ENCODE measurements at regions of chr14 and their contacts with region 1.

Region 1: GRCh38 chr14:92724516-92725340 is 23.7 kb downstream of the LGMN start:
- DNase-seq: peak; percentile 89
- ATAC-seq: peak; percentile 95
- H3K4me3 ChIP-seq: peak overlapping the region in 2 of 3 experiments; percentile 40 to 48; a peak in 4 of 6 replicates
- H3K27ac ChIP-seq: peak overlapping the region; percentile 61
- H3K4me1 ChIP-seq: peaks cover 36% of the 10 kb centered on the region
- H3K27me3 ChIP-seq: no peaks in the 10 kb centered on the region
- CTCF ChIP-seq: no peak
- EP300 ChIP-seq: peak in 1 of 2 experiments; percentile 54; a peak in 2 of 4 replicates
- POLR2A ChIP-seq: no peak
- RAD21 ChIP-seq: no peak

Region 2: DNA sequence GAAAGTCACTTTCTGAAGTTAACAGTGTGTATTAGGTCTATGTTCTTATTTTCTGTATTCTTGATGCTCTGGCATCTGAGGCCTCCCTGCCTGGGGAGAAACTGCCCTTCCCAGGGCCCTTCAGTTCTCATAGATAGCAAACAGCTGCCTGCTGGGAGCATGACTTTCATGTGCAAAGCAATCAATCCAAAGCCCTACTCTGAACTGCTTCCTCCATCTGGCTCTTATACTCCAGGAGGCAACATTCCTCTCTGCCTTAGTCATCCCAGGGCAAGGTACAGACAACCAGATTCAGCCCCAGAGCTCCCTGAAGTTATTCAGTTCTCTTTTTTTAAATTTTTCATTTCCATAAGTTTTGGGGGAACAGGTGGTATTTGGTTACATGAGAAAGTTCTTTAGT is 252.8 kb before region 1 on chr14:
- CTCF ChIA-PET with region 1: no interaction called
- POLR2A ChIA-PET with region 1: no interaction called
- in situ Hi-C with region 1: no loop called
- intact Hi-C with region 1: no loop called
- DNase-seq: peak; percentile 73
- ATAC-seq: peak; percentile 91
- H3K4me3 ChIP-seq: no peak overlapping the region
- H3K27ac ChIP-seq: no peak overlapping the region
- H3K4me1 ChIP-seq: peaks cover 45% of the 10 kb centered on the region
- H3K27me3 ChIP-seq: no peaks in the 10 kb centered on the region; a peak in 2 of 5 replicates
- CTCF ChIP-seq: no peak
- EP300 ChIP-seq: no peak
- POLR2A ChIP-seq: no peak
- RAD21 ChIP-seq: no peak

Region 3: DNA sequence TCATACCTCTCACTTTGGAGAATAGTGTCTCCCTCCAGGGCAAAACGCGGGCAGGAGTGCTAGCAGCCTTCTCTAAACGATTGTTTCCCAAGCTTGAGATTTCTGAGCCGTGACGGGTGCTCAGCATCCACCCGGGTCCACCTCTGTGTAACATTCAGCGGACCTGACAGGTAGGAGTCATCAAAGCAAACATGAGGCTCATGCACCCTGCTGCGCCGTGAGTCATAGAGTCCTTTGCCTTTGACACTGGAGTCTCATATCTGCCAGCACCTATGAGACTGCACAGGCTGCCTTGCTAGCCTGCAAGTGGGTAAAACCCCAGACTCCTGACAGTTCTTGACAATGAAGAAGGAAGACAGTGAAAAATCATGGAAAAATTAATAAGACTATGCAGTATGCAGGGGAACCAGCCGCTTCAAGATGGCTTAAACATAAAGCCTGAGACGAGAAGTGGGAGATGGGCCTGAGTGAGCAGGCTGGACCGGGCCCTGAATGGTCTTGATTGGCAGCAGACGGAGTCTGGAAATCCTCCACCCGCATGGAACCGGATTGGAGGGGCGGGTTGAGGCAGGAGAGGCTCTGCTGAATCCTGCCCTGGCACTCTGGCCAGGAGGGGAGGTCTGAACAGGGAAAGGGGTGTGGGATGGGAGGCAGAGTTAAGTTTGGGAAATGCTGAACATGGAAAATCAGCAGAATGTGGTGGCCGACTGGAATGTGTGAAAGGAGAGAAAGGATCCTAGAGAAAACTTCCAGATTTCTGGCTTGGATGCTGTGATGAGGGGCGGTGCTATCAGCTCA is 30.5 kb before region 1 on chr14:
- CTCF ChIA-PET with region 1: no interaction called
- POLR2A ChIA-PET with region 1: no interaction called
- in situ Hi-C with region 1: no loop called
- intact Hi-C with region 1: loop called (anchors 1 kb)
- DNase-seq: peak; percentile 88
- ATAC-seq: peak; percentile 94
- H3K4me3 ChIP-seq: no peak overlapping the region
- H3K27ac ChIP-seq: no peak overlapping the region
- H3K4me1 ChIP-seq: peaks cover 24% of the 10 kb centered on the region
- H3K27me3 ChIP-seq: no peaks in the 10 kb centered on the region
- CTCF ChIP-seq: no peak
- EP300 ChIP-seq: no peak; a peak in 1 of 4 replicates
- POLR2A ChIP-seq: no peak
- RAD21 ChIP-seq: no peak

Region 4: DNA sequence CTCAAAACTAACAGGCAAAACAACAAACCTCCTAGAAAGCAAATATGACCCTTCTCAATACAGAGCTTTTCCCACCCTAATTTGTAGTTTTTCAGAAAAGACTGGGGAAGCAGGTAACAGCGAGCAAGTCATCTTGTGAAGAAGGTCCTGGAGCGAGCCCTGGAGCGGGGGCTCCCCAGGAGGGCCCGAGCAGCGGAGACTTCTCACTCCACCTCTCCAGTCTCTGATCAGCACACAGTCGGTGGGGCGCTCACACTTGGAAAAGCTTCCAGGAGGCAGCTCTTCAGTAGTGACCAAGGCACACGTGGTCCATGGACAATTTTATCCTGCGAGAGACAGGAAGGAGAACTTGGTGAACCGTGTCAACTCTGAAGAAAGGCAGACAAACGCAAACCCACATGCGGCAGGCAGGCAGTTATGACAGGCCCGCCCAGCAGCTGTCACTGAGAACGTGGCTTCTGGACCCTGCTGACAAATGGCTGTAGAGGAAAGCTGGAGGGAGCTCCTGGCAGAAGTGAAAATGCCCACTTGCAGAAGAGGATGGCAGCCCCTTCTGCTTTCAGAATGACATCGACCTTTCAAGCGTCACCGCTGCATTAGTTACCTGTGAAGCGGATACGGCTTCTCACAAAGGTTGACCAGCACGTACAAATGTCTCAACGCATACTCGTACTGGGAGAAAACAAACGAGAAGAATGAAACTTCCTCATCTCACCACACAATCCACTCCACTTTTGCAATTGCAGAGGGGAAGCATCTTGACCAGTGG is 20.5 kb before region 1 on chr14:
- CTCF ChIA-PET with region 1: no interaction called
- POLR2A ChIA-PET with region 1: no interaction called
- in situ Hi-C with region 1: no loop called
- intact Hi-C with region 1: no loop called
- DNase-seq: no peak
- ATAC-seq: no peak
- H3K4me3 ChIP-seq: no peak overlapping the region
- H3K27ac ChIP-seq: no peak overlapping the region
- H3K4me1 ChIP-seq: peaks cover 5% of the 10 kb centered on the region
- H3K27me3 ChIP-seq: no peaks in the 10 kb centered on the region; a peak in 1 of 5 replicates
- CTCF ChIP-seq: no peak
- EP300 ChIP-seq: no peak
- POLR2A ChIP-seq: no peak
- RAD21 ChIP-seq: no peak

Region 5: GRCh38 chr14:92748259-92749016 is 23.7 kb after region 1 on chr14 and contains the start of gene LGMN:
- CTCF ChIA-PET with region 1: no interaction called
- POLR2A ChIA-PET with region 1: interaction called, 29 read pairs
- in situ Hi-C with region 1: no loop called
- intact Hi-C with region 1: loop called (anchors 1 kb)
- DNase-seq: peak; percentile 92
- ATAC-seq: peak; percentile 99
- H3K4me3 ChIP-seq: peak within 1 kb of the TSS; percentile 80 to 89 (median 87)
- H3K27ac ChIP-seq: peak within 1 kb of the TSS; percentile 50
- H3K4me1 ChIP-seq: peaks cover 45% of the 10 kb centered on the region
- H3K27me3 ChIP-seq: no peaks in the 10 kb centered on the region; a peak in 1 of 5 replicates
- CTCF ChIP-seq: peak; percentile 19; the same call in 1 of the 2 replicates
- EP300 ChIP-seq: no peak
- POLR2A ChIP-seq: peak; percentile 91 to 99
- RAD21 ChIP-seq: peak; percentile 23; the same call in 1 of the 2 replicates
- total RNA-seq, gene LGMN: 10.4 and 28.9 TPM in 2 replicates

Region 6: GRCh38 chr14:92755495-92755894 is 30.8 kb after region 1 on chr14:
- CTCF ChIA-PET with region 1: no interaction called
- POLR2A ChIA-PET with region 1: no interaction called
- in situ Hi-C with region 1: no loop called
- intact Hi-C with region 1: loop called (anchors 2 kb)
- DNase-seq: no peak
- ATAC-seq: no peak
- H3K4me3 ChIP-seq: no peak overlapping the region
- H3K27ac ChIP-seq: no peak overlapping the region
- H3K4me1 ChIP-seq: peaks cover 44% of the 10 kb centered on the region
- H3K27me3 ChIP-seq: 0 out of 5 replicates have a peak, but pooled peaks cover 0 to 7% of the 10 kb centered on the region in 2 experiments
- CTCF ChIP-seq: no peak
- EP300 ChIP-seq: no peak
- POLR2A ChIP-seq: no peak
- RAD21 ChIP-seq: no peak